ENCODE measurements at regions of chr10 and their contacts with region 1.

Region 1: GRCh38 chr10:73730153-73730906 is 13.8 kb upstream of the SEC24C start:
- DNase-seq: peak; percentile 95
- H3K4me3 ChIP-seq: peak overlapping the region; percentile 43 to 96 (median 92)
- H3K27ac ChIP-seq: peak overlapping the region; percentile 80
- H3K4me1 ChIP-seq: peaks cover 7% of the 10 kb centered on the region
- H3K27me3 ChIP-seq: no peaks in the 10 kb centered on the region
- CTCF ChIP-seq: no peak
- POLR2A ChIP-seq: peak; percentile 87

Region 2: DNA sequence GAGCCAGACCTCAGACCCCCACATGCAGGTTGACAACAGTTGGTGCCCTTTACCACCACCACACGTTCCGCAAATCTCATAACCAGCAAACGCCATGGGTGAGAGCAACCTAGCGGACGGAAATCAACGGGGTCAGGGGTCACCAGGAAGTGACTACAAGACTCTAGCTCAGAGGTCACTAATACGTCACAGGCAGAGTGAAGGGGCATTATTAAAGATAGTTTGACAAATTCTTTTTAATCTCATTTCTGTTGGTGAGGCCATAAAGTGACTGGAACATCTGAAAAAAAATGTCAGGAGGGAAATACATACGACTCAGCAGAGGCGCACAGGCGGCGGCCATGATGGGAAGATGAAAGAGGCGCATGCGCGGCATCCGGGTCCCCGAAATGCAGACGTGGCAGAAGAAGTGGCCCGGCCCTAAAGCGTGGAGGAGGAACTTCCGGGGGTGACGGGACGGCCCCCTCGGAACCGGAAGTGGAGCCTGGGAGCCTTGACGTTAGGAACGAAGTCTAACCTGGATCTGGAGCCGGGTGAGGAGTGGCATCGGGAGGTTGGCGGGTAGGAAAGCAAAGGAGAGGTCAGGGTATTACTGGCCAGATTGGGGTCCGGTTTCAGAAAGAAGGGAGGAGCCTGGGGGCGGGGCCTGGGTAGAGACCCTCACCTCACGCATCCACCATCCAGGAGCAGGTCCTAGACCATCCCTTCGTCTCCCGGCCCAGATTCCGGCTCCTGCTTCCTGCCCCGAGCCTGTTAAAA is 13.8 kb after region 1 on chr10 and contains the start of gene SEC24C:
- CTCF ChIA-PET with region 1: interaction called, 4 read pairs
- POLR2A ChIA-PET with region 1: interaction called, 4 read pairs
- dilution Hi-C with region 1: no loop called
- intact Hi-C with region 1: loop called (anchors 1 kb)
- DNase-seq: peak; percentile 97
- H3K4me3 ChIP-seq: peak within 1 kb of the TSS; percentile 75 to 87 (median 77)
- H3K27ac ChIP-seq: peak within 1 kb of the TSS; percentile 97
- H3K4me1 ChIP-seq: peaks cover 17% of the 10 kb centered on the region
- H3K27me3 ChIP-seq: no peaks in the 10 kb centered on the region
- CTCF ChIP-seq: no peak
- POLR2A ChIP-seq: peak; percentile 79
- total RNA-seq, gene SEC24C: 91.2 and 95.5 TPM in 2 replicates

Measured in endothelial cell of umbilical vein (primary cell).